Activated T-helper 1 cell treated with anti-CD3 and anti-CD28 coated beads, Interleukin-12 subunit alpha, Interleukin-12 subunit beta, Interleukin-2, Interleukin-4 antibody, amounts not matched to agents 30 ng/mL and 10 ng/mL and 1 ng/mL, durations not matched to agents 14 hours and 24 hours and 36 hours (primary cell): ENCODE measurements at regions of chr7 and their contacts with region 1.

Region 1: DNA sequence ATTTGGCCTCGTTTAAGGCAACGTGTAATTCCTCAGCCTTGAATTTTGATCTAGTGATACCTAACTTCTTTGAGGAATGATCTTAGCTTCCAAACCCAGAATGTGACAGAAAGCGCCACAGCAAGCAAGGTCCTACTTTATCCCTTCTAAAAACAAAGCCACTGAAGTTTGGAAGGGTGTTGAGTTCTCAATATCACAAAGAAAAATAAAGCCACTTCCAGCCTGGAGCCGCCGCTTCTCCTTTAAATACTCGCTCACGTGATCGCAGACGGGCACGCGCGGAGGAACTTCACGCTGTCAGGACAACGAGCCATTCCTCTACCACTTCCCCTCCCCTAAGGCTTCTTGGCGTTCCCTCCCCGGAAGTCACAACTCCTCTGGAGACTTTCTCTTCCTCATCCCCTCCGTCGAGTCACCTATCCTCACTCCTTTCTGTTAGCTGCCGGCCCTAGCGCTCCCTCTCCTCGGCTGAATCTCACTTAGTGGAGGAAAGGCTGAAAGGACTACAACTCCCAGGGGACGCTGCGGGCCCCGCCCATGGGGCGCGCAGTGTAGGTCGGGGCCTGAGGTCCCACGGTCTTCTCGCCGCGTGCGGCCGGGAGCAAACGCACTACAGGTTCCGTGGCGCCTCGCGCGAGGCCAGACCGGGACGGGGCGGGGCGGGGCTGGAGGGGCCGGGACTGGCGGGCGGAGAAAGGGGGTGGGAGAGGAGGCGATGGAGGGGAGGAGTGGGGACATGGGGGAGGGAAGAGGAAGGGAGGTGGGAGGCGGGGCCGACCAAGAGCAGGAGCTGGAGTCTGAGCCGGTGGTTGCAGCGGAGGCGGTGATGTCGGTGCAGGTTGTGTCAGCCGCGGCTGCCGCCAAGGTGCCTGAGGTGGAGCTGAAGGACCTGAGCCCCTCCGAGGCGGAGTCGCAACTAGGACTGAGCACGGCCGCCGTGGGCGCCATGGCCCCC is at the start of gene AHCYL2:
- DNase-seq: peak; percentile 92
- H3K4me3 Mint-ChIP-seq: peak within 1 kb of the TSS; percentile 90
- H3K27ac Mint-ChIP-seq: peak within 1 kb of the TSS; percentile 87
- H3K4me1 Mint-ChIP-seq: peaks cover 31% of the 10 kb centered on the region
- H3K27me3 Mint-ChIP-seq: peaks cover 6% of the 10 kb centered on the region
- total RNA-seq, gene AHCYL2: 14.1 and 15.5 TPM in 2 replicates

Region 2: GRCh38 chr7:128862571-128863432 is 361.7 kb before region 1 on chr7 and contains the start of gene ATP6V1F:
- intact Hi-C with region 1: loop called (anchors 2 kb)
- DNase-seq: peak; percentile 99
- H3K4me3 Mint-ChIP-seq: peak within 1 kb of the TSS; percentile 99
- H3K27ac Mint-ChIP-seq: peak within 1 kb of the TSS; percentile 96
- H3K4me1 Mint-ChIP-seq: peaks cover 19% of the 10 kb centered on the region
- H3K27me3 Mint-ChIP-seq: no peaks in the 10 kb centered on the region
- total RNA-seq, gene ATP6V1F: 131 and 134 TPM in 2 replicates

Region 3: GRCh38 chr7:129271500-129272355 is 47.2 kb after region 1 on chr7:
- intact Hi-C with region 1: loop called (anchors 1 kb)
- DNase-seq: peak; percentile 58
- H3K4me3 Mint-ChIP-seq: no peak overlapping the region
- H3K27ac Mint-ChIP-seq: no peak overlapping the region
- H3K4me1 Mint-ChIP-seq: peaks cover 9% of the 10 kb centered on the region
- H3K27me3 Mint-ChIP-seq: no peaks in the 10 kb centered on the region

Region 4: DNA sequence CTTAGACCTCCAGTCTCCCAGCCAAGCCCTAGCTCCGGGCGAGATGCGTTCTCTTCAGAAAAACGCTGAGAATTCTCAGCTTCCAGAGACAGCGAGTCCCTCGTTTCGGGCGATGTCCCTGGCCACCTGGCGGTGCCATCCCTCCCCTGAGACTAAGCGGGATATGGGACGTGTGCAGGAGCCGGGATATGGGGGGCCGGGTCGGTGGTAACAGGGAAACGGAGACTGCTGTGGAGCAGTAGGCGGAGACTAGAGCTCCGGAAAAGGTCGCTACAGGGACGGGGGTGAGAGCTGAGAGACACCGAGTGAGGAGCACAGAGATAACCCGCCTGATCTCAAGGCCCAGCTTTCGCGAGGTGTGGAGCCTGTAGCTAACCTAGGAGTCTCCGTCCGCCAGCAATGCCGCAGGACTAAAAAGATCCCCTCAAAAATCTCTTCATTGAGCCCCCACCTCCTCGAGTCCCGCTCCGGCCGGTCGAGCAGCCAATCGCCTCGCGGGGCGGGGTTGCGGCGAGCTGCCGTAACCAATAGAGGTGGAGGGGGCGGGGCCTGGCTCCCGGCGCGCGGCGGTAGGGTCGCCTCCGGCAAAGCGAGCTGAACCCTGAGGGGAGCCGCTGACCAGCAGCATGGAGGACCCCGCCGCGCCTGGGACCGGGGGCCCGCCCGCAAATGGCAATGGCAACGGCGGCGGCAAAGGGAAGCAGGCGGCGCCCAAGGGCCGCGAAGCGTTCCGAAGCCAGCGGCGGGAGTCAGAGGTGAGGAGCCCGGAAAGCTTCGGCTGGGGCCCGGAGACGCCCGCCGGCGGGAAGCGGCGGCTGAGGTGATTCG is 209.5 kb after region 1 on chr7 and contains the start of gene STRIP2:
- intact Hi-C with region 1: loop called (anchors 1 kb)
- DNase-seq: peak; percentile 94
- H3K4me3 Mint-ChIP-seq: peak within 1 kb of the TSS; percentile 95
- H3K27ac Mint-ChIP-seq: peak within 1 kb of the TSS; percentile 92
- H3K4me1 Mint-ChIP-seq: peaks cover 35% of the 10 kb centered on the region
- H3K27me3 Mint-ChIP-seq: no peaks in the 10 kb centered on the region
- total RNA-seq, gene STRIP2: 74.0 and 79.4 TPM in 2 replicates

Region 5: DNA sequence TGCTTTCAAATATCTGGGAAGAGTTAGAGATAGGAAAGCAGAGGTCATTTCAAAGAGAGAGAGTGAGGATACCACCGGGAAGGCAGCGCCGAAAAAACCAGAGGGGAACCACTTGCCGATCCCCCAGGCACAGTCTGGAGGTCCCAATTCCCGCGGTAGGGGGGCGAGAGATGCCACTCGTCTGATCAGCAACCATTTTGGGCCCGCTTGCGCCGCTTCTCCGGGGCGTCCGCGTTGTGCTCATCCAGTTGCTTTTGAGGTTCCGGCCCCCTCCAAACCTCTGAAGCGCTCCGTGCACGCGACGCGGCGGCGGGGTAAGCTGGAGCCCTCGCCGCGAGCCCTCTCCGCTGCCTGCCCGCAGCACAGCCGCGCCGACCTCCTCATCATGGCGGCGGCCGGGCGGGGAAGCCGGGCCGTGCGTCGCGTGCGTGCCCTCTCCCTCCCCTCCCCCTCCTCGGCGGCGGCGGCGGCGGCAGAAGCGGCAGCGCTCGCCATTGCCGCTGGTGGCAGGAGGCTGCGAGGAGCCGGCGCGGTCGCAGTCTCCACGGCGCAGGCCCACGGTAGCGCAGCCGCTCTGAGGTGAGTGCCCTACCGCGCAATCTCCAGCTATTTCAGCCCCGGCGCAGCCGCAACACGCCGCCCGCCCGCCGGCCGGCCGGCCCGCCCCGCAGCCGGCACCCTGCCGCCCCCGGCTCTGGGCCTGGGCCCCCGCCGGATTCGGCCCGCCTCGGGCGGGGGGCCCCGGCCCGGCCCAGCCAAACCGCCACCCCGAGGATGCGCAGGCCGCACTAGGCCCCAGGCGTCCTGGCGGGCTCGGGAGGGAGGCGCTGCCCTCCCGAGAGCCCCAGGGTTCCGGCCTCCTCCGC is 387.0 kb after region 1 on chr7 and contains the start of gene NRF1:
- intact Hi-C with region 1: loop called (anchors 1 kb)
- DNase-seq: peak; percentile 89
- H3K4me3 Mint-ChIP-seq: peak within 1 kb of the TSS; percentile 98
- H3K27ac Mint-ChIP-seq: peak within 1 kb of the TSS; percentile 99
- H3K4me1 Mint-ChIP-seq: peaks cover 48% of the 10 kb centered on the region
- H3K27me3 Mint-ChIP-seq: no peaks in the 10 kb centered on the region
- total RNA-seq, gene NRF1: 22.8 and 25.9 TPM in 2 replicates

Region 6: GRCh38 chr7:130050773-130051125 is 826.2 kb after region 1 on chr7:
- intact Hi-C with region 1: loop called (anchors 1 kb)
- DNase-seq: no peak
- H3K4me3 Mint-ChIP-seq: peak overlapping the region; percentile 99
- H3K27ac Mint-ChIP-seq: peak overlapping the region; percentile 97
- H3K4me1 Mint-ChIP-seq: peaks cover 13% of the 10 kb centered on the region
- H3K27me3 Mint-ChIP-seq: peaks cover 3% of the 10 kb centered on the region